SK-N-SH (cell line): ENCODE measurements at regions of chr16 and their contacts with region 1.

Region 1: GRCh38 chr16:10579965-10580882 is at the start of gene EMP2:
- DNase-seq: peak; percentile 95
- H3K4me3 ChIP-seq: peak within 1 kb of the TSS; percentile 65 to 81
- H3K27ac ChIP-seq: peak within 1 kb of the TSS in 1 of 2 experiments; percentile 30; a peak in 2 of 4 replicates
- H3K4me1 ChIP-seq: peaks cover 7 to 35% of the 10 kb centered on the region in 2 experiments; a peak in 2 of 4 replicates
- H3K27me3 ChIP-seq: no peaks in the 10 kb centered on the region
- CTCF ChIP-seq: peak; percentile 67
- EP300 ChIP-seq: no peak
- RAD21 ChIP-seq: peak; percentile 33
- polyA plus RNA-seq, gene EMP2: 3.1 and 4.3 TPM in 2 replicates

Region 2: DNA sequence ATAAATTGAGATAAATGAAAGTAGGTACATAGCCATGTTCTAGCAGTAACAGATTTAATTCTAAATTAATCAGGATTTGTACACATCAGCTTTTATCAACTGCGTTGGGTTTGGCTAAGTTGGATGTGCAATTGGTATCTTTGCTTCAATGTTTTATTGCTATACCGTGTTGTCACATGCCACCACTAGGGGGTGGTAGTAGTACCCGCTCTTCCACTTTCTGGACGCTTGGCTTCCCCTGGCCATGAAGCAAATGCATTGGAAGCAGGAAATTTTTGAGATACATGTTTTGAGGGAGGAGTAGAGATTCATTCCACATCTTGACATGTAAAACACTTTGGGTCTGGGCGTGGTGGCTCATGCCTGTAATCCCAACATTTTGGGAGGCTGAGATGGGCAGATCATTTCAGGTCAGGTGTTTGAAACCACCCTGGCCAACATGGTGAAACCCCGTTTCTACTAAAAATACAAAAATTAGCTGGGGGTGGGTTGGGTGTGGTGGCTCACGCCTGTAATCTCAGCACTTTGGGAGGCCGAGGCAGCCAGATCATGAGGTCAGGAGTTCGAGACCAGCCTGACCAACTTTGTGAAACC is 58.4 kb before region 1 on chr16:
- CTCF ChIA-PET with region 1: interaction called, 22 read pairs
- POLR2A ChIA-PET with region 1: no interaction called
- DNase-seq: peak; percentile 75
- H3K4me3 ChIP-seq: no peak overlapping the region; a peak in 1 of 4 replicates
- H3K27ac ChIP-seq: no peak overlapping the region
- H3K4me1 ChIP-seq: no peaks in the 10 kb centered on the region
- H3K27me3 ChIP-seq: no peaks in the 10 kb centered on the region
- CTCF ChIP-seq: peak; percentile 87
- EP300 ChIP-seq: no peak
- RAD21 ChIP-seq: peak; percentile 88

Region 3: DNA sequence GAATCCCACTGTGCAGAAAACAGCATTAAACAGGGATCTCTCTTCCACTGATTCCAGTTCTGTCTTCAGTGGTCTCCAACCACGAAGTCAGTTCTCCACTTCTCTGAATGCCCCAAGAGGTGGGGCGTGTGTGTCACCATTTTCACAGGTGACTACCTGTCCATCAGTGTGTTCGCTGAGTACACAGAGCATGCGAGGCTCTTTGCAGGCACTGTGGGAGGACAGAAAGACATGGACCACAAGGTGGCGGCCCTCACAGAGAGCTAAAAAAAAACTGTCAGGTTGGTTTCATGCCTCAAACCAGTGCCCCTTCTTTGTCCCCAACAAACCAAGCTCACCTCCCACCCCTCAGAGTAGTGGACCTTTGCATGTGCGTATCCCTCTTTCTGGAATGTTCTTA is 13.6 kb before region 1 on chr16:
- CTCF ChIA-PET with region 1: interaction called, 12 read pairs
- POLR2A ChIA-PET with region 1: interaction called, 3 read pairs
- DNase-seq: no peak
- H3K4me3 ChIP-seq: no peak overlapping the region
- H3K27ac ChIP-seq: no peak overlapping the region
- H3K4me1 ChIP-seq: no peaks in the 10 kb centered on the region
- H3K27me3 ChIP-seq: no peaks in the 10 kb centered on the region
- CTCF ChIP-seq: no peak
- EP300 ChIP-seq: no peak
- RAD21 ChIP-seq: no peak

Region 4: DNA sequence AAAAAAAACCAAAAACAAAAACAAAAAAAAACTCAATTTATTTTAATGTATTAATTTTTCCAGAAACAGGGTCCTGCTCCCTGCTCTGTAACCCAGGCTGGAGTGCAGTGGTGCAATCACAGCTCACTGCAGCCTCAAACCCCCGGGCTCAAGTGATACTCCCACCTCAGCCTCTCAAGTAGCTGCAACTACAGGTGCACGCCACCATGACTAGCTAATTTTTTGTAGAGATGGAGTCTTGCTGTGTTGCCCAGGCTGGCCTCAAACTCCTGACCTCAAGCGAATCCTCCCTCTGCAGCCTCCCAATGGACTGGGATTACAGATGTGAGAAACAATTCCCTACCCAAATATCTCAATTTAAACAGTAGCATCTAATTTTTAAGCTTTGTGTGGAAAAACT is 25.4 kb after region 1 on chr16:
- CTCF ChIA-PET with region 1: interaction called, 10 read pairs
- POLR2A ChIA-PET with region 1: no interaction called
- DNase-seq: no peak
- H3K4me3 ChIP-seq: no peak overlapping the region
- H3K27ac ChIP-seq: no peak overlapping the region
- H3K4me1 ChIP-seq: peaks cover 0 to 10% of the 10 kb centered on the region in 2 experiments; a peak in 1 of 4 replicates
- H3K27me3 ChIP-seq: no peaks in the 10 kb centered on the region; the same call in 1 of the 2 replicates
- CTCF ChIP-seq: no peak
- EP300 ChIP-seq: no peak
- RAD21 ChIP-seq: no peak

Region 5: DNA sequence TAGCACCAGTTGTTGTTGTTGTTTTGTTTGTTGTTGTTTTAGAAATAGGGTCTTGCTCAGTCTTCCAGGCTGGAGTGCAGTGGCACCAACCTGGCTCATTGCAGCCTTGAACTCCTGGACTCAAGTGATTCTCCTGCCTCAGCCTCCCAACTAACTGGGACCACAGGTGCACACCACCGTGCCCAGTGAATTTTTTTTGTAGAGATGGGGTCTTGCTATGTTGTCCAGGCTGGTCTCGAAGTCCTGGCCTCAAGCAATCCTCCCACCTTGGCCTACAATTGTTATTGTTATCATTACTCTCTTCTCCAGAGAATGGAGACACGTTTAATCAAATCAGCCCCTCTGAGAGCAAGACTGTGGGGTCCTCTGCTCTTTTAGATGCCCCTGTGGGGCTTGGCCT is 42.8 kb after region 1 on chr16:
- CTCF ChIA-PET with region 1: no interaction called
- POLR2A ChIA-PET with region 1: no interaction called
- DNase-seq: no peak
- H3K4me3 ChIP-seq: no peak overlapping the region
- H3K27ac ChIP-seq: no peak overlapping the region
- H3K4me1 ChIP-seq: peaks cover 0 to 19% of the 10 kb centered on the region in 2 experiments; a peak in 1 of 4 replicates
- H3K27me3 ChIP-seq: no peaks in the 10 kb centered on the region
- CTCF ChIP-seq: no peak
- EP300 ChIP-seq: no peak
- RAD21 ChIP-seq: no peak